Activated CD4-positive, alpha-beta T cell treated with anti-CD3 and anti-CD28 coated beads for 36 hours (primary cell): ENCODE measurements at regions of chr14 and their contacts with region 1.

Region 1: DNA sequence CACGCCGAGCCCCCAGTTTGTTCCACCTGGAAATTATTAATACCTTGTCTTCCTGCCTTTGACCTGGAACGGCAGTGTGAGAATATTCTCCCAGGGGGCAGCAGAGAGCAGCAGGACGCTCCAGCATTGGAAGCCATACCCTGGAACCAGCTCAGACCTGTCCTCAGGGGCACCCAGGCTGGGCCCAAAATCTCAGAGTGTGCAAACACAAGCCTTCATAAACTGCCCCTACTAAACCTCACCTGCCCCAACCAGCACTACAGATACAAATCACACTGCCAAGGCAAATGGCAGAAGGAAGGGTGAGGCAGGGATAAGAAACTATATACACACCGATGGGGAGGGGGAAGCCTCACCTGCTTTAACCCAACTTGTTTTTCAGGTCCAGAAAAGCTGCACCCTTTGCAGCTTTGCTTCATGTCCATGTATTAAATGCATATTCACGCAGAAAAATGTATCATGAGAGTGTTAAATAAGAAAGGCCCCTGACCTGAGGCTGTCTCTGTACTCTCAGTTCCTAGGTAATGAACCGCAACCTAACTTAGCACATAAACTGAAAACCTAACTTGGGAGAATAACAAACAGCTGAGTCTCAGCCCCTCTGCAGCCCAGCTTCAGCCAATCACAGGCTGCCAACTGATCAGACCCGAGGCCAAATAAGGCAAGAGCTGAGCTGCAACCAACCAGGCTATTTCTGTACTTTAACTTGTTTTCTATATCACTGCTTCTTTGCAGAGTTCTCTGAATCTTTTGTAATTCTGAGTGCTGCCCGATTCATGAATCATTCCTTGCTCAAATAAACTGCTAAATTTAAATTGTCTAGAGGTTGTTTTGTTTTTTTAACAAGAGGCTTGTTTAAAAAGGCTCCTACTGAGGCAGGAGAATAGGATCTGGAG is 130.1 kb downstream of the SPTSSA start:
- DNase-seq: peak; percentile 79
- ATAC-seq: peak; percentile 94
- H3K4me3 Mint-ChIP-seq: no peak overlapping the region
- H3K27ac Mint-ChIP-seq: no peak overlapping the region
- H3K4me1 Mint-ChIP-seq: peaks cover 4% of the 10 kb centered on the region
- H3K27me3 Mint-ChIP-seq: no peaks in the 10 kb centered on the region

Region 2: DNA sequence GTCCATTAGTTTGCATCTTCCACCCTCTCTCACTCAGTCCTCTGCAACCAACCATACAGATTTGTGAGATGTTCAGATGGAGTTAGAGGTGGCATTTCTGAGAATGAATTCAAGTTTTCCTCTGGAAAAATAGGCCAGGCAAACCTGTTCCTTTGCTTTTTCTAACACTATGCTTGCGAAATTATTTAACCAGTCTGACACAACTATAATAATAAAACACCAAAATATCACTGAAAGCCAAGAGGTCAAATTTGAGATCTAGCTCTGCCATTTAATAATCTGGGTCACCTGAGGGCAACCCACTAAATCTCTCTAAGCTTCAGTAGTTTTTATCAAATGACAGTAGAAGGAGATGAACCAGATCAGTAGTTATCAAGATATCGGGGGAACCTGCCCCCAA is 51.4 kb before region 1 on chr14:
- CTCF ChIA-PET with region 1: no interaction called
- POLR2A ChIA-PET with region 1: no interaction called
- intact Hi-C with region 1: no loop called
- DNase-seq: no peak
- ATAC-seq: no peak
- H3K4me3 Mint-ChIP-seq: no peak overlapping the region
- H3K27ac Mint-ChIP-seq: no peak overlapping the region
- H3K4me1 Mint-ChIP-seq: peaks cover 3% of the 10 kb centered on the region
- H3K27me3 Mint-ChIP-seq: peaks cover under 1% of the 10 kb centered on the region

Region 3: GRCh38 chr14:34498684-34499412 is 166.9 kb after region 1 on chr14:
- CTCF ChIA-PET with region 1: interaction called, 4 read pairs
- POLR2A ChIA-PET with region 1: no interaction called
- intact Hi-C with region 1: loop called (anchors 1 to 2 kb)
- DNase-seq: peak; percentile 14
- ATAC-seq: peak; percentile 57
- H3K4me3 Mint-ChIP-seq: no peak overlapping the region
- H3K27ac Mint-ChIP-seq: no peak overlapping the region
- H3K4me1 Mint-ChIP-seq: no peaks in the 10 kb centered on the region
- H3K27me3 Mint-ChIP-seq: no peaks in the 10 kb centered on the region

Region 4: GRCh38 chr14:34539407-34540180 is 207.6 kb after region 1 on chr14 and contains the start of gene EAPP:
- CTCF ChIA-PET with region 1: interaction called, 5 read pairs
- POLR2A ChIA-PET with region 1: no interaction called
- intact Hi-C with region 1: loop called in 1 of 2 experiments (anchors 5 kb)
- DNase-seq: peak; percentile 98
- ATAC-seq: peak; percentile 99
- H3K4me3 Mint-ChIP-seq: peak within 1 kb of the TSS; percentile 94
- H3K27ac Mint-ChIP-seq: peak within 1 kb of the TSS; percentile 95
- H3K4me1 Mint-ChIP-seq: peaks cover 33% of the 10 kb centered on the region
- H3K27me3 Mint-ChIP-seq: no peaks in the 10 kb centered on the region
- total RNA-seq, gene EAPP: 41.6 to 49.2 TPM